ENCODE measurements at regions of chr19 and their contacts with region 1.

Region 1: GRCh38 chr19:54102421-54103169 is at the start of gene NDUFA3:
- DNase-seq: peak; percentile 98
- ATAC-seq: peak; percentile 98
- H3K4me3 Mint-ChIP-seq: peak within 1 kb of the TSS; percentile 97
- H3K27ac Mint-ChIP-seq: peak within 1 kb of the TSS; percentile 94
- H3K4me1 Mint-ChIP-seq: peaks cover 13% of the 10 kb centered on the region
- H3K27me3 Mint-ChIP-seq: no peaks in the 10 kb centered on the region
- total RNA-seq, gene NDUFA3: 134 to 135 TPM

Region 2: GRCh38 chr19:54115109-54116063 is 12.8 kb after region 1 on chr19 and contains the starts of genes PRPF31 and TFPT:
- POLR2A ChIA-PET with region 1: interaction called, 16 read pairs
- DNase-seq: peak; percentile 89
- ATAC-seq: peak; percentile 86
- H3K4me3 Mint-ChIP-seq: peak within 1 kb of the TSS; percentile 95
- H3K27ac Mint-ChIP-seq: peak within 1 kb of the TSS; percentile 91
- H3K4me1 Mint-ChIP-seq: peaks cover 28% of the 10 kb centered on the region
- H3K27me3 Mint-ChIP-seq: no peaks in the 10 kb centered on the region
- total RNA-seq, gene PRPF31: 66.3 to 69.3 TPM
- total RNA-seq, gene TFPT: 37.9 to 43.3 TPM

Measured in activated naive CD8-positive, alpha-beta T cell treated with anti-CD3 and anti-CD28 coated beads, Interleukin-2, amount 10 ng/mL, durations not matched to agents 7 days and 5 days (primary cell).